CD4-positive, alpha-beta T cell (primary cell): ENCODE measurements at regions of chr1 and their contacts with region 1.

Region 1: GRCh38 chr1:175319418-175320230 is 127.0 kb upstream of the KIAA0040 start:
- DNase-seq: peak; percentile 53 to 86 (median 62)
- ATAC-seq: peak; percentile 80
- H3K4me3 ChIP-seq: no peak overlapping the region
- H3K4me3 Mint-ChIP-seq: no peak overlapping the region
- H3K27ac ChIP-seq: no peak overlapping the region
- H3K27ac Mint-ChIP-seq: no peak overlapping the region
- H3K4me1 ChIP-seq: peaks cover 6% of the 10 kb centered on the region
- H3K4me1 Mint-ChIP-seq: peaks cover 15% of the 10 kb centered on the region
- H3K27me3 ChIP-seq: no peaks in the 10 kb centered on the region
- H3K27me3 Mint-ChIP-seq: peaks cover 3% of the 10 kb centered on the region
- CTCF ChIP-seq: peak; percentile 94

Region 2: GRCh38 chr1:174769961-174770549 is 549.6 kb before region 1 on chr1:
- CTCF ChIA-PET with region 1: no interaction called
- POLR2A ChIA-PET with region 1: no interaction called
- intact Hi-C with region 1: loop called in 1 of 2 experiments (anchors 5 kb)
- DNase-seq: peak in 4 of 14 experiments; percentile 28 to 76 (median 70)
- ATAC-seq: peak; percentile 78
- H3K4me3 ChIP-seq: no peak overlapping the region
- H3K4me3 Mint-ChIP-seq: no peak overlapping the region
- H3K27ac ChIP-seq: no peak overlapping the region
- H3K27ac Mint-ChIP-seq: no peak overlapping the region
- H3K4me1 ChIP-seq: no peaks in the 10 kb centered on the region
- H3K4me1 Mint-ChIP-seq: no peaks in the 10 kb centered on the region
- H3K27me3 ChIP-seq: no peaks in the 10 kb centered on the region
- H3K27me3 Mint-ChIP-seq: no peaks in the 10 kb centered on the region
- CTCF ChIP-seq: peak; percentile 84

Region 3: GRCh38 chr1:174982971-174983689 is 336.5 kb before region 1 on chr1:
- CTCF ChIA-PET with region 1: no interaction called
- POLR2A ChIA-PET with region 1: no interaction called
- intact Hi-C with region 1: no loop called
- DNase-seq: peak in 8 of 14 experiments; percentile 25 to 81 (median 52)
- ATAC-seq: peak; percentile 41
- H3K4me3 ChIP-seq: no peak overlapping the region
- H3K4me3 Mint-ChIP-seq: no peak overlapping the region
- H3K27ac ChIP-seq: no peak overlapping the region
- H3K27ac Mint-ChIP-seq: peak overlapping the region; percentile 75
- H3K4me1 ChIP-seq: peaks cover 3% of the 10 kb centered on the region
- H3K4me1 Mint-ChIP-seq: peaks cover 45% of the 10 kb centered on the region
- H3K27me3 ChIP-seq: no peaks in the 10 kb centered on the region
- H3K27me3 Mint-ChIP-seq: no peaks in the 10 kb centered on the region
- CTCF ChIP-seq: peak; percentile 78

Region 4: DNA sequence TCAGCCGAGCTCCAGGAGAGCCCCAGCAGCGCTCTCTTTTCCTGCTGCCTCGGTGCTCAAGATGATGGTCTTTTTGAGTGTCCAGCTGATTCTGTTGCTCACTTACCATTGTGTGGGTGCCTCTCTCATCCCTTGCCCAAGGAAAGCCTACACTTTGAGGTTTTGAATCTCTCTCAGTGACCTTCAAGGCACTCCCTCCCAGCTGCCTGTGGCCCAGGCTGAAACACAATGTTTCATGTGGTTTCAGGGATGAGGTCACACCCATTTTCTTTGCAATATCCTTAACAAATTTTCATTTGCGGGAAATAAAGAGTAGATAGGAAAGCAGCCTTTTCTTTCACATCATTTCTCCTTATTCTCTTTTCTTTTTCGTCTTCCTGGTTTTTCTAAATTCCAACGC is 283.8 kb before region 1 on chr1:
- CTCF ChIA-PET with region 1: no interaction called
- POLR2A ChIA-PET with region 1: no interaction called
- intact Hi-C with region 1: loop called (anchors 5 kb)
- DNase-seq: no peak
- ATAC-seq: no peak
- H3K4me3 ChIP-seq: no peak overlapping the region
- H3K4me3 Mint-ChIP-seq: no peak overlapping the region
- H3K27ac ChIP-seq: no peak overlapping the region
- H3K27ac Mint-ChIP-seq: no peak overlapping the region
- H3K4me1 ChIP-seq: no peaks in the 10 kb centered on the region
- H3K4me1 Mint-ChIP-seq: no peaks in the 10 kb centered on the region
- H3K27me3 ChIP-seq: no peaks in the 10 kb centered on the region
- H3K27me3 Mint-ChIP-seq: no peaks in the 10 kb centered on the region
- CTCF ChIP-seq: no peak

Region 5: GRCh38 chr1:175146529-175147213 is 173.0 kb before region 1 on chr1:
- CTCF ChIA-PET with region 1: interaction called, 69 read pairs
- POLR2A ChIA-PET with region 1: interaction called, 9 read pairs
- intact Hi-C with region 1: no loop called
- DNase-seq: peak; percentile 42 to 79 (median 61)
- ATAC-seq: peak; percentile 69
- H3K4me3 ChIP-seq: no peak overlapping the region
- H3K4me3 Mint-ChIP-seq: no peak overlapping the region
- H3K27ac ChIP-seq: no peak overlapping the region
- H3K27ac Mint-ChIP-seq: no peak overlapping the region
- H3K4me1 ChIP-seq: peaks cover 7% of the 10 kb centered on the region
- H3K4me1 Mint-ChIP-seq: peaks cover 6% of the 10 kb centered on the region
- H3K27me3 ChIP-seq: peaks cover 13 to 19% of the 10 kb centered on the region in 2 experiments
- H3K27me3 Mint-ChIP-seq: peaks cover 45% of the 10 kb centered on the region
- CTCF ChIP-seq: peak; percentile 92

Region 6: GRCh38 chr1:175208773-175209492 is 110.7 kb before region 1 on chr1:
- CTCF ChIA-PET with region 1: no interaction called
- POLR2A ChIA-PET with region 1: no interaction called
- intact Hi-C with region 1: loop called in 1 of 2 experiments (anchors 2 kb)
- DNase-seq: peak; percentile 28 to 90 (median 44)
- ATAC-seq: peak; percentile 92
- H3K4me3 ChIP-seq: peak overlapping the region; percentile 25
- H3K4me3 Mint-ChIP-seq: peak overlapping the region; percentile 86
- H3K27ac ChIP-seq: peak overlapping the region; percentile 37 to 56
- H3K27ac Mint-ChIP-seq: peak overlapping the region; percentile 86
- H3K4me1 ChIP-seq: peaks cover 37% of the 10 kb centered on the region
- H3K4me1 Mint-ChIP-seq: peaks cover 86% of the 10 kb centered on the region
- H3K27me3 ChIP-seq: no peaks in the 10 kb centered on the region
- H3K27me3 Mint-ChIP-seq: no peaks in the 10 kb centered on the region
- CTCF ChIP-seq: no peak

Region 7: DNA sequence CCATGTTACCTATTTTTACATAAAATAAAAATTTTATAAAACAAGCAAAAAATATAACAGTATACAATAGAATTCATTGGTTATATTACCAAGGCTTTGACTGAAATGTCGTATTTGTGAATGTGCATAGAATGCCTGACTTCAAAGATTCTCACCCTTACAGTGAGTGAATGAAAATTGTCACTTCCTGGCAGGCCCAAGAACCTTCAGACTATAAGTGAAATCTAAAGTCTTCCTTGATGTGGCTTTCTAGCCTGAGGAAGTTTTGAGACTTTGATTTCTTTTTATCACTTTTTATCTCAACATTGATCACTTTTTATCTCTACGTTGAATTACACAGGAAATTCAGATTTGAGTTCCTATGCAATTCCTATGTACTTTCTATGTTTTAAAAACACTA is 22.3 kb before region 1 on chr1:
- CTCF ChIA-PET with region 1: no interaction called
- POLR2A ChIA-PET with region 1: no interaction called
- intact Hi-C with region 1: no loop called
- DNase-seq: peak in 3 of 14 experiments; percentile 43 to 60 (median 51)
- ATAC-seq: peak; percentile 95
- H3K4me3 ChIP-seq: no peak overlapping the region
- H3K4me3 Mint-ChIP-seq: peak overlapping the region; percentile 54
- H3K27ac ChIP-seq: no peak overlapping the region
- H3K27ac Mint-ChIP-seq: no peak overlapping the region
- H3K4me1 ChIP-seq: peaks cover 9% of the 10 kb centered on the region
- H3K4me1 Mint-ChIP-seq: peaks cover 48% of the 10 kb centered on the region
- H3K27me3 ChIP-seq: peaks cover 0 to 3% of the 10 kb centered on the region in 2 experiments
- H3K27me3 Mint-ChIP-seq: peaks cover 5% of the 10 kb centered on the region
- CTCF ChIP-seq: no peak

Region 8: GRCh38 chr1:175331891-175332290 is 12.3 kb after region 1 on chr1:
- CTCF ChIA-PET with region 1: no interaction called
- POLR2A ChIA-PET with region 1: no interaction called
- intact Hi-C with region 1: no loop called
- DNase-seq: no peak
- ATAC-seq: no peak
- H3K4me3 ChIP-seq: no peak overlapping the region
- H3K4me3 Mint-ChIP-seq: no peak overlapping the region
- H3K27ac ChIP-seq: no peak overlapping the region
- H3K27ac Mint-ChIP-seq: no peak overlapping the region
- H3K4me1 ChIP-seq: no peaks in the 10 kb centered on the region
- H3K4me1 Mint-ChIP-seq: no peaks in the 10 kb centered on the region
- H3K27me3 ChIP-seq: peaks cover 0 to 3% of the 10 kb centered on the region in 2 experiments
- H3K27me3 Mint-ChIP-seq: no peaks in the 10 kb centered on the region
- CTCF ChIP-seq: no peak

Region 9: GRCh38 chr1:176073524-176074157 is 754.0 kb after region 1 on chr1:
- CTCF ChIA-PET with region 1: no interaction called
- POLR2A ChIA-PET with region 1: no interaction called
- intact Hi-C with region 1: loop called in 1 of 2 experiments (anchors 1 kb)
- DNase-seq: peak in 6 of 14 experiments; percentile 4 to 65 (median 48)
- ATAC-seq: no peak
- H3K4me3 ChIP-seq: no peak overlapping the region
- H3K4me3 Mint-ChIP-seq: no peak overlapping the region
- H3K27ac ChIP-seq: no peak overlapping the region
- H3K27ac Mint-ChIP-seq: no peak overlapping the region
- H3K4me1 ChIP-seq: no peaks in the 10 kb centered on the region
- H3K4me1 Mint-ChIP-seq: peaks cover 12% of the 10 kb centered on the region
- H3K27me3 ChIP-seq: no peaks in the 10 kb centered on the region
- H3K27me3 Mint-ChIP-seq: no peaks in the 10 kb centered on the region
- CTCF ChIP-seq: peak; percentile 64